Activated B cell treated with CpG ODN at 0.5 μM for 24 hours (primary cell): ENCODE measurements at regions of chr4 and their contacts with region 1.

Region 1: DNA sequence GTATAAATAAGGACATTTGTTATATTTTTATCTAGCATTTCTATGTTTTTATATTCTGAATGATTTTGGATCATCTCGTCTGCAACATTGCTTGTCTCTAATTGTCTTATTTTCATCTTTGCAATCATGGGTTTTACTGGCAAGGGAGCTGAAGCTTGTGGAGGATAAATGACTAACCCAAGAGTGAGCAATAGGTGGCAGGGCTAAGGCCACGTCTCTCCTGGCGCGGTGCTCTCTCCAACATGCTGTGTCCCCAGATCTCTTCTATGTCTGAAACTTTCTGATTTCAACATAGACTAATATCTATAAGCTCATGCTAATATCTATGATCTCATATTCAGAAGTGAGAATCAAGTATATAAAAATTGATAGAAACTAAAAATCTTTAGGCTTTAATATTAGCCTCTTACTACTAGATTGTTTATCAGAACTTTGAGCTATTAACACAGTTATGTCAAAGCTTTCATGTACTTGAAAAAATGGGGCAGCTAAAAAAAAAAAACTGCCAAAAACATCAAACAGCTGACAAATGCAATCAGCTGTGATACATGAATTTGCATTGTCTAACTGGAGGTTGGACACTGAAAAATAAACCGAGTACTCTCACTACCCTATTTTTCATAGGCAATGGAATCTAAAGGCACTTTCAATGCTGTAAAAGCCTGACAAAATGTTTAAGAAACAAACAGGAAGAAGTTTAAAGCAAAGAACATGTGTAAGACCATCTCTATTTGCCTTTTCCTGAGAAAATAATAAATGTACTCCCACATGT is 169.2 kb downstream of the TMA16 start:
- DNase-seq: no peak
- ATAC-seq: peak; percentile 70
- H3K4me3 Mint-ChIP-seq: peak overlapping the region; percentile 62
- H3K27ac Mint-ChIP-seq: peak overlapping the region; percentile 97
- H3K4me1 Mint-ChIP-seq: peaks cover 80% of the 10 kb centered on the region
- H3K27me3 Mint-ChIP-seq: no peaks in the 10 kb centered on the region
- CTCF ChIP-seq: no peak

Region 2: GRCh38 chr4:163127621-163128020 is 536.0 kb before region 1 on chr4:
- CTCF ChIA-PET with region 1: no interaction called
- POLR2A ChIA-PET with region 1: no interaction called
- intact Hi-C with region 1: no loop called
- DNase-seq: no peak
- ATAC-seq: no peak
- H3K4me3 Mint-ChIP-seq: no peak overlapping the region
- H3K27ac Mint-ChIP-seq: no peak overlapping the region
- H3K4me1 Mint-ChIP-seq: no peaks in the 10 kb centered on the region
- H3K27me3 Mint-ChIP-seq: no peaks in the 10 kb centered on the region
- CTCF ChIP-seq: no peak

Region 3: DNA sequence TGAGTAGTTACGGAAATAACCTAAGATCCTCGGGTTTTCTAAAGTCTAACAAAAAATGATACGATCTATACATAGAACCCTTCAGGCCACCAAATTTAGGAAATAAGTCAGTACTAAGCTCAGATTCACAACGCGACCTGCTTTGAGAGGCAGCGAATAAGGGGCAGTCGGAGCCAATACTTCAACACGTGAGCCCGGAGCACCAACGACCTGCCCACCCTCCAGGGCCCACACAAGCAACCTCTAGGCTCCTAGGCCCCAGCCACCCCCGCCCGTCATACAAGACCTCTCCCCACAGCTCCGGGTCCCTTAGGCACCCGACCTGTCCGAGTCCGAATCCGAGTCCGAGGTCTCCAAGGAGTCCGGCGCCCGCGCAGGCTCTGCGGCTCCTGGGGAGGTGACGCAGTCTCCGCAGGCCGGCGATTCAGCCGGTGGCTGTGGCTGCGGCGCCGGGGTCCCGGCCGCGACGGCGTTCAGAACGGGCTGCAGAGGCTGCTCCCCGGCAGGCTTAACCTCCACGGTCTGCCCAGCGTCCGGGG is 497.5 kb before region 1 on chr4:
- CTCF ChIA-PET with region 1: no interaction called
- POLR2A ChIA-PET with region 1: no interaction called
- intact Hi-C with region 1: loop called (anchors 2 kb)
- DNase-seq: peak; percentile 63
- ATAC-seq: peak; percentile 64
- H3K4me3 Mint-ChIP-seq: peak overlapping the region; percentile 91
- H3K27ac Mint-ChIP-seq: peak overlapping the region; percentile 95
- H3K4me1 Mint-ChIP-seq: peaks cover 27% of the 10 kb centered on the region
- H3K27me3 Mint-ChIP-seq: no peaks in the 10 kb centered on the region
- CTCF ChIP-seq: no peak

Region 4: GRCh38 chr4:163554870-163555465 is 108.7 kb before region 1 on chr4:
- CTCF ChIA-PET with region 1: interaction called, 767 read pairs
- POLR2A ChIA-PET with region 1: interaction called, 37 read pairs
- intact Hi-C with region 1: loop called (anchors 1 kb)
- DNase-seq: no peak
- ATAC-seq: no peak
- H3K4me3 Mint-ChIP-seq: no peak overlapping the region
- H3K27ac Mint-ChIP-seq: peak overlapping the region; percentile 84
- H3K4me1 Mint-ChIP-seq: peaks cover 85% of the 10 kb centered on the region
- H3K27me3 Mint-ChIP-seq: no peaks in the 10 kb centered on the region
- CTCF ChIP-seq: peak; percentile 61

Region 5: GRCh38 chr4:163587867-163588266 is 75.8 kb before region 1 on chr4:
- CTCF ChIA-PET with region 1: interaction called, 71 read pairs
- POLR2A ChIA-PET with region 1: interaction called, 203 read pairs
- intact Hi-C with region 1: loop called (anchors 1 kb)
- DNase-seq: peak; percentile 34
- ATAC-seq: peak; percentile 77
- H3K4me3 Mint-ChIP-seq: peak overlapping the region; percentile 65
- H3K27ac Mint-ChIP-seq: peak overlapping the region; percentile 92
- H3K4me1 Mint-ChIP-seq: peaks cover 79% of the 10 kb centered on the region
- H3K27me3 Mint-ChIP-seq: no peaks in the 10 kb centered on the region
- CTCF ChIP-seq: no peak

Region 6: DNA sequence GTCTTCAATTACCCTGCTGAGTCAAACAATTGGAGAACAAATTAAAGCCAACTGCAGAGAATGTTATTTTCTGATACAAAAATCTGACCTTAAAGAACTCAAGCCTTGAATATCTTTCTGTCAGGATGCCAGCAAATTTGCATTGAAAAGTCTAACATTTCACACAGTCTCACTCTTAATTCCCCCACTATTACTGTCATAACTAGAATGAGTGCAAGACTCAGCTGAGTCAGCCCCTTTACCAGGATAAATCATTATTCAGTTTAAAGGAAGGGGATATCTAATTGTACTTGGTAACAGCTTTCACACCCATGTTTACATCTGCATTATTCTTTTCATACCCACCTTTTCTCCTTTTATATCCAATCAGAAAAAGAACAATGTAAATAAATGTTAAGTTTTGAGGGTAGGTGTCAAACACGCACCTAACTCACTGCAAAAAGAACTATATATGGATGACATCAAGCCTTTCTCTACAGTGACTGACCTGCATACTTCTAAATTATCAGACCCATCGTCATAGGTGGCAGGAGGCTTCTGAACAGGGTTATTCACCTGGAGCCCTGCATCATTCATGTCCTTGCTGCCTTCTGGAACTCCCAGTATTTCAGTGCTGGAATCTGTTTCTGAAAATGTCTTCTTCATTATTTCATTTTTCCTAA is 51.7 kb before region 1 on chr4:
- CTCF ChIA-PET with region 1: interaction called, 21 read pairs
- POLR2A ChIA-PET with region 1: interaction called, 200 read pairs
- intact Hi-C with region 1: loop called (anchors 1 kb)
- DNase-seq: no peak
- ATAC-seq: peak; percentile 38
- H3K4me3 Mint-ChIP-seq: peak overlapping the region; percentile 89
- H3K27ac Mint-ChIP-seq: peak overlapping the region; percentile 98
- H3K4me1 Mint-ChIP-seq: peaks cover 74% of the 10 kb centered on the region
- H3K27me3 Mint-ChIP-seq: no peaks in the 10 kb centered on the region
- CTCF ChIP-seq: no peak

Region 7: GRCh38 chr4:163681208-163681821 is 17.7 kb after region 1 on chr4:
- CTCF ChIA-PET with region 1: interaction called, 24 read pairs
- POLR2A ChIA-PET with region 1: interaction called, 4 read pairs
- intact Hi-C with region 1: loop called (anchors 1 kb)
- DNase-seq: no peak
- ATAC-seq: peak; percentile 81
- H3K4me3 Mint-ChIP-seq: no peak overlapping the region
- H3K27ac Mint-ChIP-seq: peak overlapping the region; percentile 25
- H3K4me1 Mint-ChIP-seq: peaks cover 19% of the 10 kb centered on the region
- H3K27me3 Mint-ChIP-seq: peaks cover 3% of the 10 kb centered on the region
- CTCF ChIP-seq: no peak